Mammary epithelial cell (primary cell): ENCODE measurements at regions of chr6 and their contacts with region 1.

Region 1: DNA sequence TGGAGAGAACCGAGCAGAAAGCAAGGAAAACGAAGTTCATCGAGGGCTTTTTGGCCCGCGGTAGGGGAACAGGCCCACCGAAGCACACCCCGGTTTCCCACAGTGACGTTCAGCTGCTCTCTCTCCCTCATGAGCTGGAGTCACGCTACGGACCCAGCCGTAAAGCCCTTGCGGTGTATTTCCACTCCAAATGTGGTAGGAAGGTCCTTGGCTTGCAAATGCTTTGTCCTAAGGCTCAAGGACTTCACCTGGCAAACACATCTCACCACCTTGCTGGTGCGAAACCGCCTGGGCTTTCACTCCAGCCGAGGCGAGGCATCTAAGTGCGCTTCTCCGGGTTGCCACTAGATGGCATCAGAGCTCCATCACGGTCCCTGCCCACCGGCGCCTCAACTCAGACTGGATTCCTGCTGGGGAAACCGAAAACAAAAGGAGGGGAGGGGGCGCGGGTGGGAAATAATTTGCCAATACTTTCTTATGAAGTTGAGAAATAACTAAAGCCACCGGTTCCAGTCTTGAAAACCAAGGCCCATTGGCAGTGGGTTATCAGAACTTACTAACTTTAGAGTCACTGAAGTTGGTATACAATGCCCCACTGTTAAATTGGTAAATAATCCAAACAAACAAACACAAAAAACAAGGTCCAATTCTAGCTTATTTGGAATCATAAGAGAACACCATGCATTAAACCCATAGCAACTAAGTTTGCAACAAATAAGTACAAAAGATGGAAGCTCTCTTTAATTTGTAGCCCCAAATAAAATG is 13.4 kb upstream of the FOXC1 start:
- DNase-seq: peak; percentile 43
- H3K4me3 ChIP-seq: no peak overlapping the region
- H3K27ac ChIP-seq: no peak overlapping the region
- H3K4me1 ChIP-seq: peaks cover 18% of the 10 kb centered on the region
- H3K27me3 ChIP-seq: no peaks in the 10 kb centered on the region
- CTCF ChIP-seq: peak; percentile 65 to 96

Region 2: GRCh38 chr6:1170794-1171193 is 425.5 kb before region 1 on chr6:
- CTCF ChIA-PET with region 1: no interaction called
- dilution Hi-C with region 1: no loop called
- in situ Hi-C with region 1: no loop called
- intact Hi-C with region 1: no loop called
- DNase-seq: no peak
- H3K4me3 ChIP-seq: no peak overlapping the region
- H3K27ac ChIP-seq: no peak overlapping the region
- H3K4me1 ChIP-seq: no peaks in the 10 kb centered on the region
- H3K27me3 ChIP-seq: no peaks in the 10 kb centered on the region
- CTCF ChIP-seq: no peak

Region 3: GRCh38 chr6:1242446-1242845 is 353.8 kb before region 1 on chr6:
- CTCF ChIA-PET with region 1: no interaction called
- dilution Hi-C with region 1: no loop called
- in situ Hi-C with region 1: no loop called
- intact Hi-C with region 1: no loop called
- DNase-seq: no peak
- H3K4me3 ChIP-seq: no peak overlapping the region
- H3K27ac ChIP-seq: no peak overlapping the region
- H3K4me1 ChIP-seq: peaks cover 13% of the 10 kb centered on the region
- H3K27me3 ChIP-seq: no peaks in the 10 kb centered on the region
- CTCF ChIP-seq: no peak

Region 4: GRCh38 chr6:1544603-1545002 is 51.7 kb before region 1 on chr6:
- CTCF ChIA-PET with region 1: no interaction called
- dilution Hi-C with region 1: loop called (anchors 5 kb)
- in situ Hi-C with region 1: no loop called
- intact Hi-C with region 1: no loop called
- DNase-seq: no peak
- H3K4me3 ChIP-seq: no peak overlapping the region
- H3K27ac ChIP-seq: no peak overlapping the region
- H3K4me1 ChIP-seq: no peaks in the 10 kb centered on the region
- H3K27me3 ChIP-seq: no peaks in the 10 kb centered on the region
- CTCF ChIP-seq: no peak

Region 5: GRCh38 chr6:2196079-2196679 is 599.9 kb after region 1 on chr6:
- CTCF ChIA-PET with region 1: no interaction called
- dilution Hi-C with region 1: no loop called
- in situ Hi-C with region 1: loop called (anchors 10 kb)
- intact Hi-C with region 1: loop called (anchors 2 kb)
- DNase-seq: peak; percentile 40
- H3K4me3 ChIP-seq: no peak overlapping the region
- H3K27ac ChIP-seq: no peak overlapping the region
- H3K4me1 ChIP-seq: peaks cover 12% of the 10 kb centered on the region
- H3K27me3 ChIP-seq: no peaks in the 10 kb centered on the region
- CTCF ChIP-seq: peak; percentile 74 to 84

Region 6: GRCh38 chr6:2245094-2245876 is 649.0 kb after region 1 on chr6 and contains the start of gene GMDS:
- CTCF ChIA-PET with region 1: no interaction called
- dilution Hi-C with region 1: no loop called
- in situ Hi-C with region 1: no loop called
- intact Hi-C with region 1: loop called (anchors 5 kb)
- DNase-seq: peak; percentile 87
- H3K4me3 ChIP-seq: peak within 1 kb of the TSS; percentile 55 to 90 (median 79)
- H3K27ac ChIP-seq: peak within 1 kb of the TSS; percentile 63
- H3K4me1 ChIP-seq: peaks cover 12% of the 10 kb centered on the region
- H3K27me3 ChIP-seq: no peaks in the 10 kb centered on the region
- CTCF ChIP-seq: no peak
- total RNA-seq, gene GMDS: 11.5 to 34.1 TPM

Region 7: DNA sequence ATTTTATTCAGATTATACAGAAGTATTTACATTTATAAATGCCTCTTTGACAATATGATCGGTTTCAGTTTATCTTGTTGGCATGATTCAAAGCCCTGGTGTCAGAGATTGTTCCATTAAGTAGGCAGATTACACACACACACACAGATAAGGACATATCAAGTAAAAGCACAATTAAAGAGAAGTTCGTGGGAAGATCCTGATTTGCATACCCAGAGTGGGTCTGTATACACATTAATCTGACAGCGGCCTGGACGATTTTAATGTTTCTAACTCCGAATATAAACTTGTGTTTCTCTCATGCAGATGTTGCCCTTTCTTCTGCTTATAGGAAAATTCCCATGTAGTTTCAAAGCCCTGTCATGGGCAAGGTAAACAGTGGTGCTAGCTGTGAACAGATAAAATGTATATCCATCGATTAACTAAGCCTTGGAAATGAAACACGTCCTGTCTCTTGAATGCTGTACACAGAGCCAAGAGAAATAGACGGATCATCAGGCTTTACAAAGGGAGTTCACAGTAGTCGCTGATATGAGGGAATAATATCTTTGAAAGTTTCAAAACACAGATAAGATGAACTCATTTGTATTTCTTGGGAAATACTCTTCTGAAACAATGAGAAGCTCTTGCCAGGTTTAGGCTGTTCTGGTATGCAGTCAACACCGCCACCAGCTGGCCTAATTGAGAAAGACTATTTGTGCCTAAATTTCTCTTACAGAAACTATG is 757.3 kb after region 1 on chr6:
- CTCF ChIA-PET with region 1: no interaction called
- dilution Hi-C with region 1: no loop called
- in situ Hi-C with region 1: loop called (anchors 10 kb)
- intact Hi-C with region 1: loop called (anchors 1 kb)
- DNase-seq: peak; percentile 61
- H3K4me3 ChIP-seq: no peak overlapping the region
- H3K27ac ChIP-seq: no peak overlapping the region
- H3K4me1 ChIP-seq: no peaks in the 10 kb centered on the region
- H3K27me3 ChIP-seq: no peaks in the 10 kb centered on the region
- CTCF ChIP-seq: peak; percentile 78 to 80

Region 8: GRCh38 chr6:2749969-2750600 is 1153.8 kb after region 1 on chr6:
- CTCF ChIA-PET with region 1: no interaction called
- dilution Hi-C with region 1: no loop called
- in situ Hi-C with region 1: loop called in 1 of 2 experiments (anchors 10 kb)
- intact Hi-C with region 1: no loop called
- DNase-seq: no peak
- H3K4me3 ChIP-seq: no peak overlapping the region
- H3K27ac ChIP-seq: no peak overlapping the region
- H3K4me1 ChIP-seq: no peaks in the 10 kb centered on the region
- H3K27me3 ChIP-seq: no peaks in the 10 kb centered on the region
- CTCF ChIP-seq: peak; percentile 77 to 86